OCI-LY7 (cell line): ENCODE measurements at regions of chr10 and their contacts with region 1.

Region 1: GRCh38 chr10:7818295-7819122 is at the start of gene TAF3:
- DNase-seq: peak; percentile 96
- H3K4me3 ChIP-seq: peak within 1 kb of the TSS; percentile 96
- H3K27ac ChIP-seq: no peak within 1 kb of the TSS
- H3K4me1 ChIP-seq: peaks cover 21% of the 10 kb centered on the region
- CTCF ChIP-seq: no peak
- total RNA-seq, gene TAF3: 3.8 and 4.4 TPM in 2 replicates

Region 2: GRCh38 chr10:6875269-6875865 is 943.1 kb before region 1 on chr10:
- CTCF ChIA-PET with region 1: no interaction called
- POLR2A ChIA-PET with region 1: no interaction called
- intact Hi-C with region 1: no loop called
- DNase-seq: no peak
- H3K4me3 ChIP-seq: no peak overlapping the region
- H3K27ac ChIP-seq: no peak overlapping the region
- H3K4me1 ChIP-seq: no peaks in the 10 kb centered on the region
- CTCF ChIP-seq: no peak

Region 3: GRCh38 chr10:7787857-7788638 is 30.5 kb before region 1 on chr10 and contains the starts of genes ATP5F1C and KIN:
- CTCF ChIA-PET with region 1: interaction called, 11 read pairs
- POLR2A ChIA-PET with region 1: interaction called, 39 read pairs
- intact Hi-C with region 1: loop called (anchors 2 kb)
- DNase-seq: peak; percentile 97
- H3K4me3 ChIP-seq: peak within 1 kb of the TSS; percentile 79
- H3K27ac ChIP-seq: peak within 1 kb of the TSS; percentile 35
- H3K4me1 ChIP-seq: peaks cover 20% of the 10 kb centered on the region
- CTCF ChIP-seq: no peak
- total RNA-seq, gene ATP5F1C: 221 and 242 TPM in 2 replicates
- total RNA-seq, gene KIN: 12.0 and 14.3 TPM in 2 replicates